WTC11 (cell line): ENCODE measurements at regions of chrX and their contacts with region 1.

Region 1: DNA sequence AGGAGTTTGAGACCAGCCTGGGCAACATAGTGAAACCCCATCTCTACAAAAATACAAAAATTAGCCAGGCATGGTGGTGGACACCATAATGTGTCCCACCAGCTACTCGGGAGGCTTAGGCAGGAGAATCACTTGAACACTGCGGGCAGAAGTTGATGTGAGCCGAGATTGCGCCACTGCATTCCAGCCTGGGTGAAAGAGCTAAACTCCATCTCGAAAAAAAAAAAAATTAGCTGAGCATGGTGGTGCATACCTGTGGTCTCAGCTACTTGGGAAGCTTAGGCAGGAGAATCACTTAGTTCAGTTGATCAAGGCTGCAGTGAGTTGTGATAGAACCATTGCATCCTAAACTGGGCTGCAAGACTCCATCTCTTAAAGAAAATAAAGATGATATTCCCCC is 91.2 kb downstream of the PLS3 start:
- DNase-seq: no peak
- ATAC-seq: no peak
- H3K4me3 Mint-ChIP-seq: no peak overlapping the region
- H3K27ac Mint-ChIP-seq: no peak overlapping the region
- H3K4me1 Mint-ChIP-seq: peaks cover 44% of the 10 kb centered on the region
- H3K27me3 Mint-ChIP-seq: no peaks in the 10 kb centered on the region
- CTCF ChIP-seq: no peak

Region 2: DNA sequence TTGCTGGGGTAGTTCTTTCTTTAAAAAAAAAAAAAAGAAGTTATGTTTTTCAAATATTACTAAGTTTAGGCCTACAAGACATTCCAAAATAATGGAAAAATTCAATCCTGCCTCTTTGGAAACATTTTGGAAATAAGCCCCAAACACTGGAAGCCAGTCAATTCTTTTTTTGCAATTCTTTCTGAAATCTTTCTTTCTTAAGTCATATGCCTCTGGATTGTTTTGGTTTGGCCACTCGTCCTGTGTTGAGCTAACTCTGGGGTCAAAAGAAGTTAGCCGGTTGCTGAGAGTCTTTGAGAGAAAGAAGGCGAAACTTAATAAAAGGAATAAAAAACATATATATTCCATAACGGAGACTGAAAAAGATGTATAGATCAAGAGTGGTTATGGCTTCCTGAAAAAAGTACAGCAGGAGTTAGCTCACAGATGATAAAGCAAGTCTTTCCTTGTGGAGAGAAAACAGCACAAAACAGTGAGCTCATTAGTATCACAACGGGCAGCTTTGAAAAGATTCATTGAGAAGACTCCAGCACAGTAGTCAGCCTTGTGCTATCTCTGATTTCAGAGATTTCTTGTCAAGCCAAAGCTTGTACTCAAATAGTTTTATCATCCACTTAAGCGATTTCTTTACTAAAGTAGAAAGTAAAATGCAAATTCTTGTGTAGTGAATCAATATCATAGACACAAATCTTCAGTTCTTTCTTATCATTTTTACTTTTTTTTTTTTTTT is 26.5 kb before region 1 on chrX:
- CTCF ChIA-PET with region 1: no interaction called
- POLR2A ChIA-PET with region 1: no interaction called
- DNase-seq: no peak
- ATAC-seq: no peak
- H3K4me3 Mint-ChIP-seq: no peak overlapping the region
- H3K27ac Mint-ChIP-seq: peak overlapping the region; percentile 45; the same call in 1 of the 2 replicates
- H3K4me1 Mint-ChIP-seq: peaks cover 15% of the 10 kb centered on the region
- H3K27me3 Mint-ChIP-seq: no peaks in the 10 kb centered on the region
- CTCF ChIP-seq: no peak

Region 3: DNA sequence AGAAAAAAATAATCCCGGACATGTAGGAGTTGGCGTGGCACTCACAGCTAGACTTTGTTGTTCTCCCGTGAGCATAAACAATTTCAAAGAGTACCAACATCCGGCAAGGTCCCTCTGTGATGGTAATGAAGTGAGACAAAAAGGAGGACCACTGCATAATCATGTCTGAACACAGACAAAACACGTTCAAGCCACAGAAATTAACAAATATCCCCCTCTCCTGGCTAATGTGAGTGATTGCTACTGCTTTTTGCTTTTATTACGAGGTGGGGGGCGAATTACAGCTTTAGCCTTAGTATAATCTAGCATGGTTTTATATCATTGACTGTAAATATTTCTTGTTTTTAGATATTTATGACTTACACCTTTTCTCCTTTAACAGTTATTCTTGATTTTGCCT is 27.2 kb after region 1 on chrX:
- CTCF ChIA-PET with region 1: interaction called, 11 read pairs
- POLR2A ChIA-PET with region 1: no interaction called
- DNase-seq: no peak
- ATAC-seq: peak; percentile 58
- H3K4me3 Mint-ChIP-seq: no peak overlapping the region
- H3K27ac Mint-ChIP-seq: peak overlapping the region; percentile 63; the same call in 1 of the 2 replicates
- H3K4me1 Mint-ChIP-seq: peaks cover 21% of the 10 kb centered on the region
- H3K27me3 Mint-ChIP-seq: no peaks in the 10 kb centered on the region
- CTCF ChIP-seq: no peak

Region 4: DNA sequence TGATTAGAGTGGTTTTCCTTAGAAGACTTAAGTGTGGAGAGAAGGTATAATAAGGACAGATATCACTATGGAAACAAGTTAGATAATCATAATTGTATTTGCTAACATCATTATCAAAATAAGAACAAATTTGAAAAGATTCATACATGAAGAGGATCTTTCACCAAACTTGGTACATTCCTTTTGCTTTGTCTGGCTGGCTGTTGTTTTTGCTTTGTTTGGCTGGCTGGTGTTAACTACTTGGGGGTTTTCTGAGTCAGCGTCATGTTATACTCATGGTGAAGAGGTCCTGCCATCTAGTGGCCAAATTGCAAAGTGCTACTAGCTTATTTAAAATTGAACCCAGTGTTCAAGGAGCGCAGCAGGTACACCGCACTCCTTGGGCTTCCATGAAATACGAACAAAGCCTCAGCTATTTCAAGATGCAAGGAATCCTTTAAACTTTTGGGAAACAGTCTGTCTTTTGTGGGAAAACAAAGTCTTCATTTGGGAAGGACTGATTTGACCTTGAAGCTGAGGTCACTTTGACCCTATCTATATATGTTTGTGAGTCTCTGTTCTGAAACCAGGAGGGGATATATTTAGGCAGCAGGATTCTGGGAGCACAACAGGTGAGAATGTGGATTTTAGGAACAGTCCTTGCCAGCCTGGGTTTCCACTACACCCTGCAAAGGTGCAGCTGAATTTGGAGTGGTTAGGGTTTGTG is 38.4 kb after region 1 on chrX:
- CTCF ChIA-PET with region 1: interaction called, 24 read pairs
- POLR2A ChIA-PET with region 1: no interaction called
- DNase-seq: peak; percentile 60
- ATAC-seq: peak; percentile 76
- H3K4me3 Mint-ChIP-seq: no peak overlapping the region
- H3K27ac Mint-ChIP-seq: peak overlapping the region; percentile 99
- H3K4me1 Mint-ChIP-seq: peaks cover 62% of the 10 kb centered on the region
- H3K27me3 Mint-ChIP-seq: no peaks in the 10 kb centered on the region
- CTCF ChIP-seq: peak; percentile 43; the same call in 1 of the 2 replicates

Region 5: GRCh38 chrX:115713481-115713880 is 61.3 kb after region 1 on chrX:
- CTCF ChIA-PET with region 1: no interaction called
- POLR2A ChIA-PET with region 1: no interaction called
- DNase-seq: no peak
- ATAC-seq: no peak
- H3K4me3 Mint-ChIP-seq: no peak overlapping the region
- H3K27ac Mint-ChIP-seq: no peak overlapping the region
- H3K4me1 Mint-ChIP-seq: peaks cover 18% of the 10 kb centered on the region
- H3K27me3 Mint-ChIP-seq: no peaks in the 10 kb centered on the region
- CTCF ChIP-seq: no peak